Left cardiac atrium (tissue), 4 donors: ENCODE measurements at regions of chr11 and their contacts with region 1.

Region 1: GRCh38 chr11:47819743-47820142 is 28.4 kb downstream of the NUP160 start:
- DNase-seq: no peak
- ATAC-seq: no peak

Region 2: DNA sequence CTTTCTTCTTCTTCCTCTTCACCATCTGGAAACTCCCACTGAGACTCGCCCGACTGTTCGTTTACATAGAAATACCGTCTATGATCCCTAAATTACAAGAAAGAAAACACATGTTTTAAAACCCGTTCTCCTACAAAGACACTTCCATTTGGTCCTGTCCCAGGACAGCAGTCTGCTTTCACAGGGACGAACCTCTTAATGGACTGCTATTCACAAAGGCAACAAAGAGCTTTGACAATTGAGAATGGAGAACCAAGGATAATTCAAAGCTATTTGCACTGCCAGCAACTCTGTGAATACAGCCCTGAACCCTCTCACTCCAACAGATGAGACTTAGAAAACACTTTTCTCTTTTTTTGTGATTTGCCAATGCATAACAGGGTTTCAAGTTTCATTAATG is 88.3 kb before region 1 on chr11:
- intact Hi-C with region 1: loop called in 1 of 2 experiments (anchors 10 kb)
- DNase-seq: no peak
- ATAC-seq: no peak